CD14-positive monocyte (primary cell): ENCODE measurements at regions of chrX and their contacts with region 1.

Region 1: DNA sequence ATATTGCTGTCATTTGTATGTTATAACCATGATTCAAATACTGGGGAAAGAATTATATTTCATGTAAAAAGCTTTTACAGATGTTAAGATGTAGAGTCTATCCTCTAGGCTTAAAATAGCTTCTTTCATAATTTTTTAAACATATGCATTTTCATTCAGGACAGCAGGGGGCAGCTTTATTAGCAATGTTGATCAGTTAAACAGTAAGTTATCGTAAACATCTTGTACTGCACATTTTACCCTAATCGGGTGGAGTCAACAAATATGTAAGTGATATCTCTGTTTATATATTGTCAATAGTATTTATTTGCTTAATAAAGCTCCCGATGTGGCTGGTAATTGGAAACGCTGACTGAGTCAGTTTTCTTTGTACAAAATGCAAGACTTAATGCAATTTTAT is 142.5 kb upstream of the MED14 start:
- DNase-seq: peak; percentile 1 to 18 (median 4)
- H3K4me3 ChIP-seq: no peak overlapping the region
- H3K4me3 Mint-ChIP-seq: no peak overlapping the region
- H3K27ac ChIP-seq: no peak overlapping the region
- H3K27ac Mint-ChIP-seq: no peak overlapping the region
- H3K4me1 ChIP-seq: no peaks in the 10 kb centered on the region
- H3K4me1 Mint-ChIP-seq: no peaks in the 10 kb centered on the region
- H3K27me3 ChIP-seq: peaks cover 0 to 8% of the 10 kb centered on the region in 2 donors
- H3K27me3 Mint-ChIP-seq: peaks cover 0 to 15% (median 0%) of the 10 kb centered on the region in 3 donors
- CTCF ChIP-seq: peak; percentile 58

Region 2: DNA sequence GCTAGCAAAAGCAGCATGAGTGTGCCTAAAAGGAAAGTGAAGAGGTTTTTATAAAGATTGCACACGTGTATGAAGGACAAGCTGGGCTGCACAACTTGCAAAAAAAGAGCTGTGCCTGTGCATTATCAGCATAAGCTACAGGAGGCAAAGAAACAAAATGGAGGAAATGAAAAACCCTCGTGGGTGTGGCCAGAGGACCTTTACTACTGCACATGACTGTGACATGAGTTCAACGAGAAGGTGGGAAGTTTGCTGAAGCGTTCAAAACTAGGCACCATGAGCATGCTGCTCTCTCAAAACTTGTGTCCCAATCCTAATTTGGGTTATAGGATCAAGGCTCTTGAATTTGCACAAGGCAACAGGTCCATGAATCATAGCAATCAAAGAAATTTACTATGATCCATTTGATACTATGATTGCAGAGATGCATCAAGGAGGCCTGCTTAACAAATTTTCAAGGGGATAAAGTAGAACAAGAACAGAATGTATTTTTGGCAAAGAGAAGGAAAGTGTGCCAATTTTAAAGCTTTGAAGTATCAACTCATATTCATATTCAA is 192.4 kb before region 1 on chrX:
- intact Hi-C with region 1: no loop called
- DNase-seq: no peak
- H3K4me3 ChIP-seq: no peak overlapping the region
- H3K4me3 Mint-ChIP-seq: no peak overlapping the region
- H3K27ac ChIP-seq: no peak overlapping the region
- H3K27ac Mint-ChIP-seq: peak overlapping the region in 2 of 7 donors; percentile 28 to 54
- H3K4me1 ChIP-seq: no peaks in the 10 kb centered on the region
- H3K4me1 Mint-ChIP-seq: no peaks in the 10 kb centered on the region
- H3K27me3 ChIP-seq: peaks cover 0 to 52% of the 10 kb centered on the region in 2 donors
- H3K27me3 Mint-ChIP-seq: peaks cover 0 to 40% (median 0%) of the 10 kb centered on the region in 3 donors
- CTCF ChIP-seq: no peak

Region 3: DNA sequence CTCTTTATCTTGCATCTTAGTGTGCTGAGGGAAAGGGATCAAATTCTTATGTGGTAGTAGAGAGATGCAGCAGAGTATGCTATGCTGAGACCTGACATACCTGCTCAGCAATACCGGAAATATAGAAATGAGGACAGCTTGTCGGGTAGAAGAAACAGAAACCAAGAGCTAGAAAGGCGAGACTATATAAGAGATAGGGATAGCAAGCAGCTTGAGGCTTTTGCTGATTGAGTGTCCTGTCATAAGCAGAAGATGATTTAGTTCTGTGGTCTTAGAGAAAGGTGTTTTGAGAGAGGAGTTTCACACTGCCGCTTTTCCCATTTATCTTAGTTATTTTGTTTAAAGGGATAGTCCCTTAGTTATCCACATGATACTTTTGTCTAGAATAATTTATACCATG is 239.1 kb after region 1 on chrX:
- intact Hi-C with region 1: loop called in 1 of 2 experiments (anchors 10 kb)
- DNase-seq: no peak
- H3K4me3 ChIP-seq: no peak overlapping the region
- H3K4me3 Mint-ChIP-seq: no peak overlapping the region
- H3K27ac ChIP-seq: no peak overlapping the region
- H3K27ac Mint-ChIP-seq: peak overlapping the region in 2 of 7 donors; percentile 22 to 34
- H3K4me1 ChIP-seq: peaks cover 0 to 10% of the 10 kb centered on the region in 2 donors
- H3K4me1 Mint-ChIP-seq: peaks cover 27% of the 10 kb centered on the region
- H3K27me3 ChIP-seq: peaks cover 0 to 2% of the 10 kb centered on the region in 2 donors
- H3K27me3 Mint-ChIP-seq: peaks cover 0 to 14% (median 0%) of the 10 kb centered on the region in 3 donors
- CTCF ChIP-seq: no peak